Naive thymus-derived CD4-positive, alpha-beta T cell (primary cell): ENCODE measurements at regions of chr2 and their contacts with region 1.

Region 1: GRCh38 chr2:74690571-74690970 is 36.5 kb downstream of the SEMA4F start:
- DNase-seq: peak in 6 of 9 donors; percentile 15 to 41 (median 33)
- ATAC-seq: peak; percentile 78
- H3K4me3 ChIP-seq: no peak overlapping the region
- H3K4me3 Mint-ChIP-seq: no peak overlapping the region
- H3K27ac ChIP-seq: no peak overlapping the region
- H3K27ac Mint-ChIP-seq: no peak overlapping the region
- H3K4me1 ChIP-seq: no peaks in the 10 kb centered on the region
- H3K4me1 Mint-ChIP-seq: peaks cover 0 to 2% (median 0%) of the 10 kb centered on the region in 7 donors
- H3K27me3 ChIP-seq: no peaks in the 10 kb centered on the region
- H3K27me3 Mint-ChIP-seq: peaks cover 0 to 38% (median 0%) of the 10 kb centered on the region in 5 donors

Region 2: GRCh38 chr2:74715078-74715791 is 24.7 kb after region 1 on chr2:
- CTCF ChIA-PET with region 1: no interaction called
- POLR2A ChIA-PET with region 1: no interaction called
- intact Hi-C with region 1: loop called in 1 of 2 experiments (anchors 1 kb)
- DNase-seq: peak; percentile 61 to 84 (median 75)
- ATAC-seq: peak; percentile 94
- H3K4me3 ChIP-seq: peak overlapping the region; percentile 52
- H3K4me3 Mint-ChIP-seq: peak overlapping the region; percentile 82 to 98 (median 90)
- H3K27ac ChIP-seq: no peak overlapping the region
- H3K27ac Mint-ChIP-seq: peak overlapping the region in 5 of 9 donors; percentile 3 to 68 (median 21)
- H3K4me1 ChIP-seq: no peaks in the 10 kb centered on the region
- H3K4me1 Mint-ChIP-seq: peaks cover 4 to 10% (median 8%) of the 10 kb centered on the region in 7 donors
- H3K27me3 ChIP-seq: peaks cover 0 to 8% of the 10 kb centered on the region in 2 donors
- H3K27me3 Mint-ChIP-seq: peaks cover 0 to 21% (median 8%) of the 10 kb centered on the region in 5 donors

Region 3: DNA sequence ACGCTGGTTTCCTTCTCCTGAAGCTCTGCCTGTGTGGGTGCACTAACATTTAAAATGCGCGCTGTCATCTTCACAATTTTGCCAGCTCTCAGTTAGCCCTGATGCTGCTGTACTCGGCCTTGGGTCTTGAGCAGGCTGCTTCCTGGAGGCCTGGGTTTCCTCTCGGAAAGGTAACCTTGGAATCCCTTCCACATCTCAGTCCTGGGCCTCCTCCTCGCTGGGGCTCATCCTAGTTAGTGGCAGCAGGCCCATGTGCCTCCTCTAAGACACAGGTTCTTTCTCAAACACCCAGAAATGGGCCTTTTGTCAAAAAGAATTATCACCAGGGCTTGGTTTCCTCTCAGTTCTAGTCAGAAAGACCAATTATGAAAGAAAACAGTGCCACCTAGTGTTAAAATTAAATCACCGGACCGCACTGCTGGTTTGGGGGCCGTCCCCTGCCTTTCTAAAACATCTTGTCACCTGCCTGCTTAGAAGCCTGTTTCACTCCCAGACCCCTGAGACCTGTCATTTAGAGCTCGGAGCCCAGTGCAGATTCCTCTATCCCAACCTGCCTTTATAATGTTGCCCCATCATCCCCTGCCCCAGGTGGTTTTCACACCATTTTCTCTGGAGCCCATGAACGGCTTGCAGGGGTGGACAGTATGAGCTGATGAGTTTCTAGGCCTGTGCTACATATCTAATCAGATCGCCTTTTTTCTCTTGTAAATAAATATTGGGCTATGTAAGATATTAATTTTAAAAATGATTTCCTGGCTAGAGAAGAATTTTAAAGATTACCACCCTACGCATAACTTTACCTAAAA is 185.7 kb after region 1 on chr2:
- CTCF ChIA-PET with region 1: interaction called, 10 read pairs
- POLR2A ChIA-PET with region 1: no interaction called
- intact Hi-C with region 1: loop called (anchors 1 kb)
- DNase-seq: peak in 7 of 9 donors; percentile 36 to 80 (median 76)
- ATAC-seq: peak; percentile 74
- H3K4me3 ChIP-seq: no peak overlapping the region
- H3K4me3 Mint-ChIP-seq: no peak overlapping the region
- H3K27ac ChIP-seq: no peak overlapping the region
- H3K27ac Mint-ChIP-seq: peak overlapping the region in 6 of 9 donors; percentile 20 to 78 (median 62)
- H3K4me1 ChIP-seq: peaks cover 0 to 3% of the 10 kb centered on the region in 2 donors
- H3K4me1 Mint-ChIP-seq: peaks cover 3 to 14% (median 6%) of the 10 kb centered on the region in 7 donors
- H3K27me3 ChIP-seq: no peaks in the 10 kb centered on the region
- H3K27me3 Mint-ChIP-seq: no peaks in the 10 kb centered on the region

Region 4: GRCh38 chr2:75403991-75404428 is 713.4 kb after region 1 on chr2:
- CTCF ChIA-PET with region 1: interaction called, 3 read pairs
- POLR2A ChIA-PET with region 1: no interaction called
- intact Hi-C with region 1: loop called in 1 of 2 experiments (anchors 1 kb)
- DNase-seq: peak in 6 of 9 donors; percentile 11 to 53 (median 49)
- ATAC-seq: peak; percentile 75
- H3K4me3 ChIP-seq: no peak overlapping the region
- H3K4me3 Mint-ChIP-seq: no peak overlapping the region
- H3K27ac ChIP-seq: no peak overlapping the region
- H3K27ac Mint-ChIP-seq: no peak overlapping the region
- H3K4me1 ChIP-seq: no peaks in the 10 kb centered on the region
- H3K4me1 Mint-ChIP-seq: peaks cover 0 to 46% (median 6%) of the 10 kb centered on the region in 7 donors
- H3K27me3 ChIP-seq: peaks cover 0 to 6% of the 10 kb centered on the region in 2 donors
- H3K27me3 Mint-ChIP-seq: peaks cover 0 to 9% (median 4%) of the 10 kb centered on the region in 5 donors

Region 5: DNA sequence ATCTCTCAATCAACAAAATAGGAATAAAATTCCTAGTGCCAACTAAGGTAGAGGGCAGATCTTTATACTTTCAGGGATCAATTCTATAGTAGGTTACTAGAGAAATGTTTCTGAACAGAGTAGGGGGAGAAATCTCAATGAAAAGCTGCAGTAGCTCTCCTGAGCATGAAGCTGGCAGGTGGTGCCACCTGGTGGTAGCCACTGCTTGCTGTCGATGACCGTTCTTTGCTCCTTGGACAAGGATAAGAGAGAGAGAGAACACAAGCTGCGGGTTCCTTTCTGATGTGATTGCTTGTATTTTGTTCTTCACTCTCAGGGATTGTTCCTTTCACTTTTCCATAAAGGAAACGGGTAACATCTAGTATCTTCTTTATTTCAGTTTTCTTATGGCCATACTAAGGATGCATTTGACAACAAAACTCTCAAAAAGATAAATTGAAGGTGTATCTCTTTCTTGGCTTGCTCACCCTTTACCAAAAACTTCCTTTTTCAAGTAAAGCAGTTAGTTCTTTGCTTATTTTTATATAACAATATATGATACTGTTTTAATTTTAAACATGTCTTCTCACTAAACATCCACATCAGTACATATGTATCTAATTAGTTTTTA is 937.4 kb after region 1 on chr2:
- CTCF ChIA-PET with region 1: no interaction called
- POLR2A ChIA-PET with region 1: no interaction called
- intact Hi-C with region 1: loop called (anchors 5 to 10 kb)
- DNase-seq: peak in 7 of 9 donors; percentile 20 to 50 (median 38)
- ATAC-seq: peak; percentile 79
- H3K4me3 ChIP-seq: no peak overlapping the region
- H3K4me3 Mint-ChIP-seq: no peak overlapping the region
- H3K27ac ChIP-seq: no peak overlapping the region
- H3K27ac Mint-ChIP-seq: no peak overlapping the region
- H3K4me1 ChIP-seq: no peaks in the 10 kb centered on the region
- H3K4me1 Mint-ChIP-seq: no peaks in the 10 kb centered on the region
- H3K27me3 ChIP-seq: no peaks in the 10 kb centered on the region
- H3K27me3 Mint-ChIP-seq: peaks cover 16 to 38% (median 29%) of the 10 kb centered on the region in 5 donors